ENCODE measurements at regions of chr2 and their contacts with region 1.

Region 1: GRCh38 chr2:196160101-196160500 is 11.3 kb downstream of the STK17B start:
- DNase-seq: peak; percentile 93
- H3K4me3 Mint-ChIP-seq: peak overlapping the region; percentile 86
- H3K27ac Mint-ChIP-seq: peak overlapping the region; percentile 88
- H3K4me1 Mint-ChIP-seq: peaks cover 60% of the 10 kb centered on the region
- H3K27me3 Mint-ChIP-seq: no peaks in the 10 kb centered on the region

Region 2: GRCh38 chr2:195543902-195544894 is 615.9 kb before region 1 on chr2:
- intact Hi-C with region 1: loop called (anchors 5 kb)
- DNase-seq: peak; percentile 75
- H3K4me3 Mint-ChIP-seq: peak overlapping the region; percentile 29
- H3K27ac Mint-ChIP-seq: peak overlapping the region; percentile 91
- H3K4me1 Mint-ChIP-seq: peaks cover 67% of the 10 kb centered on the region
- H3K27me3 Mint-ChIP-seq: no peaks in the 10 kb centered on the region

Region 3: DNA sequence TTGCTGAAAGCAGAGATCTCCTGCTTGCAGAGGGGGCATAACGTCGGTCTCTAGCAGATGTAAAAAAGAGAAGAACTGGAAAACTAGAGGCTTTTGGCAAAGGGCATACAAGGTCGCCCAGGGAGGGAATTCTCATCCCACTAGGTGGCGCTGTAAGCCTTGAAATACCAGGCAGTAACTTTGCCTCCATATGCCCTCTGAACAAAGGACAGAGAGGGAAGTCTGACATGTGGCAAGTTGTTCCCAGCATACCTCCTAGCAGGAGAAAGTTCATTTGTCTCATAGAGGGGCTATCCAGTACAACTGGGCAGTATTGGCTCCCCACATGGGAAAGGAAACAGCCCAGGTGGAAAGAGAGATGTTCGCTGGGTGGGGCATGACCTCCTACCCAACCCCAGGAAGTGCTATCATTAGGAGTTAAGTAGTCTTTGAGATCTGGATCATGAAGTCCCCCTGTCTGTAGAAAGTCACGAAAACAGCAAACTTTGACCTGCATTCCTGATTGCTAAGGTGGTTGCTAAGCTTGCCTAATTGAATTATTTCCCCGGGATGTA is 28.6 kb before region 1 on chr2:
- intact Hi-C with region 1: loop called (anchors 2 kb)
- DNase-seq: peak; percentile 90
- H3K4me3 Mint-ChIP-seq: no peak overlapping the region
- H3K27ac Mint-ChIP-seq: peak overlapping the region; percentile 83
- H3K4me1 Mint-ChIP-seq: peaks cover 16% of the 10 kb centered on the region
- H3K27me3 Mint-ChIP-seq: no peaks in the 10 kb centered on the region

Region 4: GRCh38 chr2:196149948-196150347 is 10.2 kb before region 1 on chr2:
- intact Hi-C with region 1: loop called (anchors 1 kb)
- DNase-seq: peak; percentile 53
- H3K4me3 Mint-ChIP-seq: peak overlapping the region; percentile 70
- H3K27ac Mint-ChIP-seq: peak overlapping the region; percentile 90
- H3K4me1 Mint-ChIP-seq: peaks cover 75% of the 10 kb centered on the region
- H3K27me3 Mint-ChIP-seq: no peaks in the 10 kb centered on the region

Region 5: DNA sequence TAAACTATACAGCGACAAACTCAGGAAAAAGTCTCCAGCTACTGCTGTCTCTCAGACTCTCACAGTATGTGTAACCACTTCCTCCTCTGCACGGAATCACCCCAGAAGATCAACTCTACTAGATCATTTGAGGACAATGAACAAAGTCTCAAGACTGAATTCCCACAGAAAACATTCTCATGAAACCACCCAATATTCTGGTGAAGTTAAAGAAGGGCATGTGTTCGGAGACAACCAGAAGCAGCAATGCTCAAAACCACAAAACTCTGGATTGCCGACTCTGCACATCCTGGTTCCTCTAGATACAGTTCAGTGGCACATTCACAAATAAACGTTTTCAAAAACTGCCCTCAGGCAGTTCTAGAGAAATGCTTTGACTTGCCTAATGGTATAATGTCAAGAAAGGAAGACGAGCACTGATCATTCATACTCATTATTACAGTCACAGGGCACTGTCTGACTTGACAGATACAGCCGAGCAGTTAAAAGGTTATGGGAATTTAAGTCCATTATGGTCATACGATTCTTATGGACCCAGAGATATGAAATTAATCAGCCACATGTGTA is 103.2 kb after region 1 on chr2:
- intact Hi-C with region 1: loop called (anchors 2 kb)
- DNase-seq: peak; percentile 89
- H3K4me3 Mint-ChIP-seq: peak overlapping the region; percentile 72
- H3K27ac Mint-ChIP-seq: peak overlapping the region; percentile 93
- H3K4me1 Mint-ChIP-seq: peaks cover 58% of the 10 kb centered on the region
- H3K27me3 Mint-ChIP-seq: no peaks in the 10 kb centered on the region

Measured in activated CD4-positive, alpha-beta T cell treated with anti-CD3 and anti-CD28 coated beads, Interleukin-2, amount 10 ng/mL, durations not matched to agents 24 days and 14 days (primary cell).